Aorta (tissue), 5 donors: ENCODE measurements at regions of chr4 and their contacts with region 1.

Region 1: DNA sequence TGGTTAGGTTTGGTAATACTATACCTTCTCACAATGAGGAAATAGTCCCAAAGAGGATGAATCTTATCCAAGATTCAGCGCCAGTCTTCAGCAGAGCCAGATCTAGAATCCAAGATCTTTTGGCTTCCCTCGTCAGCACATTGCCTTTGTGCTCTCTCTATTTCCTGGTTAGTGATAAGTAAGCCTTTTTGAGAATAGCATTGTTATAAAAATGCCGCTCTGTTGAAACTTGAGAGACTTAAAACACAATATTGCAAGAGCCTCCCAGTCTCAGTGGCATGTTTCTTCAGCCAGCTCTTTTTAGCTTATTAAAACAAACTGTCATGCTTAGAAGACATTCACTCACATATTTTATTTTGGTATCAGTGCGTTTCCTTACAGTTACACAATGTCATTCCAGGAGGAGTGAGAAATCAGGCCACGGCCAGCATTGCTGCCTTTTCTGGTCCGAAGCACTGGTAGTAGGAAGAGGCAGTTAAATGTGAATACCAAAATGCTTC is 141.4 kb downstream of the KLHL8 start:
- DNase-seq: no peak
- ATAC-seq: peak; percentile 80
- H3K4me3 ChIP-seq: no peak overlapping the region
- H3K27ac ChIP-seq: peak overlapping the region; percentile 39 to 51
- H3K4me1 ChIP-seq: peaks cover 10% of the 10 kb centered on the region in 2 donors
- H3K27me3 ChIP-seq: no peaks in the 10 kb centered on the region

Region 2: GRCh38 chr4:87043044-87043820 is 35.8 kb before region 1 on chr4:
- intact Hi-C with region 1: loop called in 1 of 2 experiments (anchors 5 kb)
- DNase-seq: no peak
- ATAC-seq: no peak
- H3K4me3 ChIP-seq: no peak overlapping the region
- H3K27ac ChIP-seq: no peak overlapping the region
- H3K4me1 ChIP-seq: peaks cover 4 to 18% of the 10 kb centered on the region in 2 donors
- H3K27me3 ChIP-seq: no peaks in the 10 kb centered on the region

Region 3: DNA sequence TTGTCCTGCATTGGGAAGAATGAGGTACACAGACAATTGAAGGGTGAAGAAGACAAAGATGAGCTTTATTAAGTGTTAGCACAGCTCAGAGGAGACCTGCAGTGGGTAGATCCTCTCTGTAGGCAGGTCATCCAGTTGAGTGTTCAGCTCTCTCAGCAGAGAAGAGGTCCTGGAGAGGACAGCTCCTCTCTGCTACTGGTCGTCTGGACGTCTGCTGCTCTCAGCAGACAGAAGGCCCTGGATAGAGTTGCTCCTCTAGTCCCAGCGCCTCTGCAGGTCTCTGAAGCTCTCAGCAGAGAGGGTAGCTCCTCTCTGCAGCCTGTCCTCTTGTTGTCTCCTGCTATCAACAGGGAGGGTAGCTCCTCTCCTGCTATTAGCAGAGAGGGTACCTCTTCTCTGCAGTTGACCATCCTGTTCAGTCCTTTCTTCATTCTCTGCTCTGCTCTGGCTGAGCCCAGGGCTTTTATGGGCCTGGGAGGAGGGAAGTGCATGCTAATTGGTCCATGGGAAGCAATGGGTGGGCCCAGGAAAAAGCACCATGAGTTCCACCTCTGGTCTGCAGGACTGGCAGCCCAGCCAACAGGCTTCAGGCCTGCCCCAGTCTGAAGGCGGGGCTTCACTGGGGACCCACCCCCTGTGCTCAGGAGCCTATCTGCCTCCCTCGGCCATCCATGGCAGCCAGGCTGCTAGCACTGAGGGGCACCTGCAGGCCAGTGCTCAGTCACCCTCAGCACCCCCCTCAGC is 666.2 kb after region 1 on chr4:
- intact Hi-C with region 1: no loop called
- DNase-seq: peak in 1 of 2 donors; percentile 47
- ATAC-seq: no peak
- H3K4me3 ChIP-seq: no peak overlapping the region
- H3K27ac ChIP-seq: no peak overlapping the region
- H3K4me1 ChIP-seq: no peaks in the 10 kb centered on the region
- H3K27me3 ChIP-seq: no peaks in the 10 kb centered on the region